Activated CD4-positive, alpha-beta memory T cell treated with anti-CD3 and anti-CD28 coated beads for 36 hours (primary cell): ENCODE measurements at regions of chr10 and their contacts with region 1.

Region 1: DNA sequence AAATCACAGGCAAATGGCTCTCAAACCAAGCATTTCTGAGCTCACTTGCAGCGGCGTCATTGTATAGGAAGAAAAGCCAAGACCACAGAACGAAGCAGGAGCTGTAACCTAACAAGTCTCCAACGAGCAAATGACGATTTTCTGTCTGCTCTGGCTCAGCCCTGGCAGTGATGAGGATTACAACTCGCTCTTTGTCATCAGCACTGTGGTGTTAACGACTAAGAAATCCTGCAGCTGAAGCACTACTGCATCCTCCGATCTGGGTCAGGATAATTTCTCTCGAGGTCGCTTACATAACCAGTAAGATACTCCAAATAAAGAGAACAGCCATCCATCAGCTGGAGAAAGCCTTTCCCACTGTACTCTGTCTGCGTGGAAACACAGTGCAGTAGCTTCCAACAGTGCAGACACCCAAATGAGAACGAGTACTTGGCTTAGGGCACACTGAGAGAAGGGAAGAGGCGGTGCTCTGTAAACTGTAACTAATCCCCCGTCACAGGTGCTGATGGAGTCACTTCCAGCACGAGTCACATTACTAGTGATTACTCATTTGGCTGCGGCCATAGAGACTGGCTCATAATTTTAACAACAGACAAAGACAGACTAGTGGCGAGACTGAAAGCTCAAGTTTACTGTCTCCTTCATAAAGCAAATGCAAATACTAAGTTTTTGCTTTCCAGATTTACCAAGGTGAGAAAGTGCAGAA is 135.8 kb downstream of the NRBF2 start:
- DNase-seq: peak; percentile 89
- H3K4me3 Mint-ChIP-seq: peak overlapping the region; percentile 97
- H3K27ac Mint-ChIP-seq: peak overlapping the region; percentile 97
- H3K4me1 Mint-ChIP-seq: peaks cover 24% of the 10 kb centered on the region
- H3K27me3 Mint-ChIP-seq: no peaks in the 10 kb centered on the region

Region 2: GRCh38 chr10:61937631-61938351 is 1331.2 kb before region 1 on chr10:
- CTCF ChIA-PET with region 1: no interaction called
- POLR2A ChIA-PET with region 1: no interaction called
- intact Hi-C with region 1: loop called (anchors 5 kb)
- DNase-seq: peak; percentile 30
- H3K4me3 Mint-ChIP-seq: peak overlapping the region; percentile 74
- H3K27ac Mint-ChIP-seq: peak overlapping the region; percentile 92
- H3K4me1 Mint-ChIP-seq: peaks cover 88% of the 10 kb centered on the region
- H3K27me3 Mint-ChIP-seq: no peaks in the 10 kb centered on the region

Region 3: DNA sequence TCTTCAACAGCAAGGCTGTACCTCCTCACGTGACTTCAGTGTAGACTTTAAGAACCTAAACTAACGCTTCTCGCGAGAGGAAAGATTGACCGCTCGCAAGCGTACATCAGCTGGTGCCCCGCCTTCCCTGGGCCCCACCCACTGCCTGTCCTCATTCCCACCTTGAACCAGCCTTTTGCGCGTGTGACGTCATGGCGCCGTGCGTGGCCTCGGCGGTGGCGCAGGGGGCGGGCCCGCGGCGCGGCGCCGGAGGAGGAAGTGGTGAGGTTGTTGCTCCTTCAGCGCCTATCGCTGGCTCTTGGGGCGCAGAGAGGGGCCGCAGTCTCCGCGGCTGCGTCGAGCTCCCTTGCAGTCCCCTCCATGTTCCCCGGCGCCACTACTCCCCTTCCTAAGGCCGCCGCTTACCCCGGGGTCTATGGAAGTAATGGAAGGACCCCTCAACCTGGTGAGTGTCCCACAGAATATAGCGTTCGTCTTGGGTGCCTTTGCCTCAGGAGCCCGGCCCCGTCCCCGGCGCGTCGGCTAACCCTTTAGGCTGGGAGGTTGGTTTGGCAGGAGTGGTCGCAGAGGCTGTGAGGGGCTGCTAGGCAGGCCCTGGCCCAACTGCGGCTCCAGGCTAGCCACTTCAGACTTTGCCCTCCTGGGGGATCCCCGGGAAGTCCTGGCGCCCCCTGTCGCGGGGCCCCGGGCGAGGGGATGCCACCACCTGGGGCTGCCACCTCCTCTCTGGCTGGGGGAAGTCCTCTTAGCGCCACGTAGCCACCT is 135.7 kb before region 1 on chr10 and contains the start of gene NRBF2:
- CTCF ChIA-PET with region 1: no interaction called
- POLR2A ChIA-PET with region 1: interaction called, 3 read pairs
- intact Hi-C with region 1: loop called (anchors 2 kb)
- DNase-seq: peak; percentile 98
- H3K4me3 Mint-ChIP-seq: peak within 1 kb of the TSS; percentile 89
- H3K27ac Mint-ChIP-seq: peak within 1 kb of the TSS; percentile 91
- H3K4me1 Mint-ChIP-seq: peaks cover 32% of the 10 kb centered on the region
- H3K27me3 Mint-ChIP-seq: peaks cover 3% of the 10 kb centered on the region
- total RNA-seq, gene NRBF2: 21.3 to 21.7 TPM

Region 4: GRCh38 chr10:63227207-63227915 is 41.6 kb before region 1 on chr10:
- CTCF ChIA-PET with region 1: interaction called, 3 read pairs
- POLR2A ChIA-PET with region 1: interaction called, 14 read pairs
- intact Hi-C with region 1: loop called (anchors 1 kb)
- DNase-seq: no peak
- H3K4me3 Mint-ChIP-seq: peak overlapping the region; percentile 47
- H3K27ac Mint-ChIP-seq: peak overlapping the region; percentile 80
- H3K4me1 Mint-ChIP-seq: peaks cover 50% of the 10 kb centered on the region
- H3K27me3 Mint-ChIP-seq: no peaks in the 10 kb centered on the region

Region 5: DNA sequence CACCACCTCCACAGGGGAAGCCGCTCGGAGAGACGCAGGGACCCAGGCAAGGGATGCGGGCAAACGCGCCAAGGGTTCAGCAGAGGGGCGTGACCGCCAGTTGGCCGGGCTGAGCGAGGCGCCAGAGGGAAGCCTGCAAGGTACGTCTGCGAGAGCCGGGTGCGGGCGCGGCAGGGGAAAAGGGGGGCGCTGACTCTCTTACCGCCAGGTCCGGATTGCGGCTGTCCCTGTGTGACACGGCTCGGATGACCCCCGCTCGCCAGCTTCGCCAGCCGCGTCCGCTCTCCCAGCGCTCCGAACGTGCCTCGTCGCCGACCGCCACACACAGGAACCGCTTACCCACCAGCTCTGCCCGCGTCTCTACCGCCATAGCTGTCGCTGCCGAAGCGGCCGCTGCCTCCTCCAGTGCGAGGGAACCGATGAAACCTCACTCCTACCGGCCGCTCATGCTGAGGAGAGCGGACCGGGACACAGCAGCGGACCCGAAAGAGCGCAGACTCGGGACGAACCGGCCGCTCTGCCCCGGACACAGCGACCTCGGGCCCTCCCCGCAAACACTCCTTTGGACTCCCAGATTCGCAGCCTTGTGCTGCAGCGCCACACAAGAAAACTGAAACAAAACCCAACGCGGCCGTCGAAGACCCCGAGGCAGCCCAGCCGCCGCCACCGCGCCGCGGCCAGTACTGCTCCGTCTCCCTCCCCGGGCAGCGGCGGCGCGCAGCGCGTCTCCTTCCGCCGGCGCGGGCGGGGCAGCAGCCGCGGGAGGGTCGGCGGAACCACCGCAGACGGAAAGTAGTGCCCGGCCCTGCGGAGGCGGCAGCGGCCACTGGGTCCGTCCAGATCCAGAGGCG is 196.6 kb after region 1 on chr10 and contains the start of gene JMJD1C:
- CTCF ChIA-PET with region 1: no interaction called
- POLR2A ChIA-PET with region 1: no interaction called
- intact Hi-C with region 1: loop called (anchors 2 kb)
- DNase-seq: peak; percentile 69
- H3K4me3 Mint-ChIP-seq: peak within 1 kb of the TSS; percentile 91
- H3K27ac Mint-ChIP-seq: peak within 1 kb of the TSS; percentile 58
- H3K4me1 Mint-ChIP-seq: peaks cover 18% of the 10 kb centered on the region
- H3K27me3 Mint-ChIP-seq: no peaks in the 10 kb centered on the region
- total RNA-seq, gene JMJD1C: 42.6 to 47.3 TPM

Region 6: GRCh38 chr10:63629363-63630084 is 360.6 kb after region 1 on chr10:
- CTCF ChIA-PET with region 1: interaction called, 8 read pairs
- POLR2A ChIA-PET with region 1: interaction called, 5 read pairs
- intact Hi-C with region 1: loop called (anchors 1 kb)
- DNase-seq: peak; percentile 89
- H3K4me3 Mint-ChIP-seq: peak overlapping the region; percentile 90
- H3K27ac Mint-ChIP-seq: peak overlapping the region; percentile 75
- H3K4me1 Mint-ChIP-seq: peaks cover 24% of the 10 kb centered on the region
- H3K27me3 Mint-ChIP-seq: peaks cover 2% of the 10 kb centered on the region

Region 7: DNA sequence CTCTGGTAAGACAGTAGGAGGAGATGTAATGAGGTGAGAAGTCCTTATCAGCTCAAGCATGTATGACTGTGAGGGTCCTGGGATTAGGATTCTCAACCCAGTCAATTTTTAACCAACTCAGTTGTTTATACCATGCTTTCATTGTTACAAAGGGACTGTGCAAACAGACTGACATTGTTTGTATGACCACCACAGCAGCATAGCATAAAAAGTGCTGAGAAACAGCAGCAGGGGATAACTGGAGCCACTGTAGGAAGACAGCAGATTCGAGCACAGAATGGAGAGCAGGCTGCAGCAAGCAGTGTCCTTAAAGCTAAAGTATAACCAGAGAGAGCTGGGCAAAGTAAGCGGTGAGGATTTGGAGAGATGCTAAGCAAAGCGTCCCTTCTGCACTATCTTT is 1081.7 kb after region 1 on chr10:
- CTCF ChIA-PET with region 1: no interaction called
- POLR2A ChIA-PET with region 1: no interaction called
- intact Hi-C with region 1: no loop called
- DNase-seq: no peak
- H3K4me3 Mint-ChIP-seq: no peak overlapping the region
- H3K27ac Mint-ChIP-seq: no peak overlapping the region
- H3K4me1 Mint-ChIP-seq: no peaks in the 10 kb centered on the region
- H3K27me3 Mint-ChIP-seq: no peaks in the 10 kb centered on the region